ENCODE measurements at regions of chr1 and their contacts with region 1.

Region 1: DNA sequence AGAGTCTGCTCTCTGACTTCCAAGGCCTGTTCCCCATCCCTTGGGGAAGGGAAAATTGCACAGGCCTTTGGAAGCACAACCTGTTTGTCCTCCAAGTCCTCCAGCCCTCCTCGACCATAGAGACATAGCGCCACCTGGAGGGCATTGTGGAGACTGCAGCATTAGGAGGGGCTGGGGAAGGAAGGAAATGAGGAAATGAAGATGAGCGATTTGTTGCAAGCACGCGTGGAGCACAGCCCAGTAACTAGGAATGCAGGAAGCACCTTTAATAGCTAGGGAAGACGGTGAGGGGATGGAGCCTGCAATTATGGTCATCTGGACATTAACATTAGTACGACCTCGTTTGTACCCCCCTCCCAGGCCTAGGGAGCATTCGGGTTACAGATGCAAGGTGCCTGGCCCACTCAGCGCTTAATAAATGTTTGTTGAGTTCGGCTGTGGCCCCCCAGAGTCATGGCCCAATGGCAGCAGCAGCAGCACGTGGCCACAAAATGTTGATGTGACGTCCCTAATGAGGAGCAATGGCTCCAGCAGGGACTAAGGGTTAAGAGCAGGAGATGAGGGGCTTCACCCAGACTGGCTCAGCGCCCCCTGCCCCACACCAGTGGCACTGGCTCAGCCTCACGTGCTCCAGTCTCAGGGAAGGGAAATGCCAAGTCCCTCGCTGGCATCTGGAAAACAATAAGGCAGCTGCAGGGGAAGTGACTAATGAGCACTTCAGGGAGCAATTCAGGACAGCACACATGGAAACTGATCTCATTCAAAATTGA is 8.0 kb upstream of the CAMK2N1 start:
- DNase-seq: peak; percentile 74
- H3K4me3 ChIP-seq: no peak overlapping the region
- H3K27me3 ChIP-seq: peaks cover 2% of the 10 kb centered on the region; the same call in 1 of the 2 replicates
- CTCF ChIP-seq: peak; percentile 96

Region 2: GRCh38 chr1:20212685-20213331 is 281.2 kb before region 1 on chr1:
- CTCF ChIA-PET with region 1: interaction called, 21 read pairs
- POLR2A ChIA-PET with region 1: no interaction called
- DNase-seq: no peak
- H3K4me3 ChIP-seq: no peak overlapping the region
- H3K27me3 ChIP-seq: peaks cover 5% of the 10 kb centered on the region
- CTCF ChIP-seq: peak; percentile 84

Region 3: GRCh38 chr1:20322825-20323612 is 171.0 kb before region 1 on chr1:
- CTCF ChIA-PET with region 1: no interaction called
- POLR2A ChIA-PET with region 1: no interaction called
- DNase-seq: no peak
- H3K4me3 ChIP-seq: no peak overlapping the region
- H3K27me3 ChIP-seq: no peaks in the 10 kb centered on the region
- CTCF ChIP-seq: no peak

Region 4: DNA sequence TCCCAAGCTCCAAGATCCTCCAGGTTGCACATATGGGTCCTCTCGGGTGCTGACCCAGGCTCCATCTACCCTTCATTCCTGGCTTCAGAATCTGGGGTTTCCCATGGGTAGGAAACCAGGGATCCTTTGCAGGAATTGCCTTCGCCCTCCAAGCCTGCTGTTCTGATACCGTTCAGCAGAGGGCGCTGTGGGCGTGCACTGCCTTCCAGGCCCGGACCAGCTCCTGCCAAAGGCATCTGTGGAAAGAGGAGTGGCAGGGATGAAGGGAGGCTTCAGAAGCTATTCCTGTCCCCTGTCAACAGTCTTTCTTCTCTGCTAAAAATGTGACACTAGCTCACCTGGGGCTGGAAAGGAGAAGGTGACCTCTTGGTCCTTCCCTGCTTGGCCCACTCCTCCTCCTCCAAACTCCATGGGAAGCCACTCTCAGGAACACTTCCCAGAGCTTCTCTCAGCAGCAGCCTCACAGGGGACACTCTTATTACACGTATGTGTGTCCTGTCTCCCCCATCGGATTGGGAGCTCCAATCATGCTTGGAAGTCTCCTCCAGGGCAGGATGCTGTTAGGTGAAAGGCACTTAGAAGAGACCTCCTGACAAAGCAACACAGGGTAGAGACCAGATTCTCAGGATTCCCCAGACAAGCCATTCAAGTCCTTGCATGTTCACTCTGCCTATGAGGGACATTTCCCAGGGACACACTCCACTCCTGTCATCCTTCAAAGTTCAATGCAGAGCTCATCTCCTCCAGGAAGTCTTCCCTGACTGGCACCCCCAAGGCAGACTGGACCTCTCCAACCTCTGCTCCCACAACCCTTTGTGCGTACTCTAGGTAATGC is 132.0 kb before region 1 on chr1:
- CTCF ChIA-PET with region 1: interaction called, 111 read pairs
- POLR2A ChIA-PET with region 1: no interaction called
- DNase-seq: no peak
- H3K4me3 ChIP-seq: no peak overlapping the region
- H3K27me3 ChIP-seq: peaks cover 34% of the 10 kb centered on the region
- CTCF ChIP-seq: peak; percentile 91

Region 5: GRCh38 chr1:20376880-20377494 is 117.0 kb before region 1 on chr1:
- CTCF ChIA-PET with region 1: interaction called, 29 read pairs
- POLR2A ChIA-PET with region 1: interaction called, 4 read pairs
- DNase-seq: no peak
- H3K4me3 ChIP-seq: no peak overlapping the region
- H3K27me3 ChIP-seq: peaks cover 4% of the 10 kb centered on the region; the same call in 1 of the 2 replicates
- CTCF ChIP-seq: peak; percentile 90

Region 6: GRCh38 chr1:20472860-20473711 is 20.9 kb before region 1 on chr1:
- CTCF ChIA-PET with region 1: interaction called, 12 read pairs
- POLR2A ChIA-PET with region 1: no interaction called
- DNase-seq: no peak
- H3K4me3 ChIP-seq: no peak overlapping the region
- H3K27me3 ChIP-seq: no peaks in the 10 kb centered on the region
- CTCF ChIP-seq: no peak

Measured in BJ (cell line).